Activated CD8-positive, alpha-beta T cell treated with anti-CD3 and anti-CD28 coated beads for 36 hours (primary cell): ENCODE measurements at regions of chr1 and their contacts with region 1.

Region 1: DNA sequence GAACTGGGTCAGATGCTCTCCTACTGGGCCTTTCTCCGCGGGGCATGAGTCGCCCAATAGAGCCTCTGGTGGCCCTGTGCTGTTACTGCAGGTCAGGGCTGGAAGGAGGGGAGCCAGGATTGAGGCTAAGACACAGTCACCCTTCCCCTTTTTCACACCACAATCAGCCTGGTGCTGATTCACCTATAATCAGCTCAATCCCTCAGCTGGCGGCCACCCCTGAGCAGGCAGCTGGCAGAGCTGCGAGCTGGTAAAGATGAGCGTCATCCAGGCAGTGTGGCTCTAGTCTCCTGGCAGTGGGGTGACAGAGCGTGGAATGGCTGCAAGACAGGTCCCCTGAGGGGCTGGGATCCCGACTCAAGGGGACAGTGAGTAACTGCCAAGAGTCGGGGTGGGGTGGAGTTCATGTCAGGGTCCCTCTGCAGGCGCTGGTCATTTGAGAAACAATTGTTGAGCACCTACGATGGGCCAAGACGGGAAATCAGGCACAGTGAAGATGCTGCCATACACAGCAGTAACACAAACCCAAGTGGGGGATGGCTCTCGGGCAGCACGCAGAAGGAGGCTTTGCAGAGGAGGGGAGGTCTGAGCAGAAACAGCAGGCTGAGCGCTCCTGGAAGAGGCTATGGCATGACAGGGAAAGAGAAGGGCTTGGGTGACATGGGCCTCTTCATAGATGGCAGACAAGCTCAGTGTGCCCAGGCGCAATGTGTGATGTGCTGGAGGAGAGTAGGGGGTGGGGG is 21.8 kb downstream of the ATF3 start:
- DNase-seq: peak; percentile 75
- ATAC-seq: peak; percentile 100
- H3K4me3 Mint-ChIP-seq: no peak overlapping the region
- H3K27ac Mint-ChIP-seq: no peak overlapping the region
- H3K4me1 Mint-ChIP-seq: peaks cover 7% of the 10 kb centered on the region
- H3K27me3 Mint-ChIP-seq: peaks cover 6% of the 10 kb centered on the region
- CTCF ChIP-seq: peak; percentile 94

Region 2: GRCh38 chr1:212618501-212619405 is 11.6 kb before region 1 on chr1:
- CTCF ChIA-PET with region 1: interaction called, 16 read pairs
- POLR2A ChIA-PET with region 1: interaction called, 4 read pairs
- intact Hi-C with region 1: no loop called
- DNase-seq: no peak
- ATAC-seq: no peak
- H3K4me3 Mint-ChIP-seq: no peak overlapping the region
- H3K27ac Mint-ChIP-seq: no peak overlapping the region
- H3K4me1 Mint-ChIP-seq: peaks cover 32% of the 10 kb centered on the region
- H3K27me3 Mint-ChIP-seq: no peaks in the 10 kb centered on the region
- CTCF ChIP-seq: no peak